Left colon (tissue), 2 donors: ENCODE measurements at regions of chr11 and their contacts with region 1.

Region 1: GRCh38 chr11:56783448-56784041 is 35.0 kb upstream of the OR9G4 start:
- DNase-seq: no peak
- ATAC-seq: peak; percentile 73

Region 2: GRCh38 chr11:55942785-55943392 is 840.7 kb before region 1 on chr11:
- intact Hi-C with region 1: loop called in 1 of 2 experiments (anchors 5 kb)
- DNase-seq: no peak
- ATAC-seq: peak; percentile 48

Region 3: DNA sequence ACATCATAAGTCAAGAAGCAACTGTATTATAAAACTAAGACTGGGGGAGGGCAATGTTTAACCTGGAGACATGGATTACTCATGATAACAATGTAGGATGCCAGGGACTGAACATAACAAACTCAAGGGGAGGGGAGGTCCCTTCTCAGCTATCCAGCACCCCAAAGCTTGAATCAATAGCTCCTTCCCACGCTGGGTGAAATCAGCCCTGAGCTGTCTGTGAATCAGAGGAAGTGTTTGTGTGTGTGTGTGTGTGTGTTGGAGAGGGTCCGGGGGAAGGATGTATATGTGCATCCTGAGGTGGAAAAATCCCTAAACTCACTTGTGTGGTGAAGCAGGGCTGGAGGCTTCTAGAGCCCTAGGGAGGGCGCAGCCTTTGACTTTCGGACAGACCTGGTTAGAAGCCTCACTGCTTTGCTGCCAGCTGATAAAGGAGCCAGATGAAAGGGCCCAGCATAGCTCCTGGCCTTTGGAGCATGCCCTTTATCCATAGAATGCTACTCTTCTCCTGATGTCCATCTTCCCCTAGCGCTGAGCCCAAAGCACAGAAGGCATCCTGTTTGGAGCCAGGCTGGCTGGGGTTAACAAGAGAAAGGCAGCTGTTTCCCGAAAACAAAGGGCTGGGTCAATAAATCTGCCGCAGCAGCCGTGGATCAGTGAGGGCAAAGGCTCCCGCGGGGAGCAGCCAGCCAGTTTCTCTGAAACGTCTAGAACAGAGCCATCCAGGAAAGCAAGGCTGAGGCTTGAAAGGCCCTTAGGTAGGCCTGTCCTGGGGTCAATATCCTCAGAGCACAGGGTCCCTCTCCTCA is 505.4 kb after region 1 on chr11:
- intact Hi-C with region 1: no loop called
- DNase-seq: peak in 1 of 2 donors; percentile 65
- ATAC-seq: peak; percentile 78